Ascending aorta (tissue), 2 donors: ENCODE measurements at regions of chr13 and their contacts with region 1.

Region 1: GRCh38 chr13:44917589-44918325 is 71.5 kb downstream of the NUFIP1 start:
- DNase-seq: peak; percentile 82 to 97
- H3K4me3 ChIP-seq: peak overlapping the region; percentile 42 to 60
- H3K27ac ChIP-seq: peak overlapping the region; percentile 98
- H3K4me1 ChIP-seq: peaks cover 21 to 38% of the 10 kb centered on the region in 2 donors
- H3K27me3 ChIP-seq: no peaks in the 10 kb centered on the region
- CTCF ChIP-seq: peak; percentile 53 to 81 (median 62)

Region 2: DNA sequence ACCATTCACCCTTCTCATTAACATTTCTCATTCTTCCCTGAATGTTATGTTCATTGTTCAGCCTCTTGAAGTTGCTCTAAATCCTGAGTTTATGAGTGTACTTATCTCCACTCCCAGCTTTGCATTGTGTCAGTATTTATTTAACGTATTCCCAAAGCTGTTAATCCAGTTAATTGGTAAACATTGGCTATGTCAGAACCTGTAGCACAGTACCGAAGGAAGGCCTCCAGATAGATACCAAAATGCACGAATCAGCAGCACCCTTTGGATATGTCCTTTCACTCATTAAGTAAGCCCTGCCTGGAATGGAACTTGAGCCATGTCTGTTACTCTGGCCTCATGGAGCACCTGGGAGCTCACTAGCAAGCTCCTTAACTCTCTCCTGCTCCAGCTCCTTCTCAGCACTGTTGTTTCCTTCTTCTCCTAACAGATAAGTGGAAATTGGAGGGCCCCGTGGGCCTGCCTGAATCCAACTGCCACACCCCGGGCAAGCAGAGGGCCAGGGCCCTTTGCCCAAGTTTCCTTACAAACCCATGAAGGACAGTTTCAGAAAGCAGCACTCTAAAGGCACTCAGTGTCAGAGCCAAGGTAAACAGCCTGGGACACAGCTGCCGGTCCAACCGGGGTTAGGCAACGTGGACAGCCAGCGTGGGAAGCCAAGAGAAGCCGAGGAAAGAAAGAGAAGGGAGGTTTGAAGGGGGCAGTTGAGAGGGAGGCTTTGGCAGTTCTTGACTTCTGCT is 699.1 kb before region 1 on chr13:
- intact Hi-C with region 1: loop called (anchors 10 kb)
- DNase-seq: peak; percentile 37 to 90
- H3K4me3 ChIP-seq: no peak overlapping the region
- H3K27ac ChIP-seq: peak overlapping the region; percentile 68 to 78
- H3K4me1 ChIP-seq: peaks cover 10 to 33% of the 10 kb centered on the region in 2 donors
- H3K27me3 ChIP-seq: no peaks in the 10 kb centered on the region
- CTCF ChIP-seq: no peak

Region 3: DNA sequence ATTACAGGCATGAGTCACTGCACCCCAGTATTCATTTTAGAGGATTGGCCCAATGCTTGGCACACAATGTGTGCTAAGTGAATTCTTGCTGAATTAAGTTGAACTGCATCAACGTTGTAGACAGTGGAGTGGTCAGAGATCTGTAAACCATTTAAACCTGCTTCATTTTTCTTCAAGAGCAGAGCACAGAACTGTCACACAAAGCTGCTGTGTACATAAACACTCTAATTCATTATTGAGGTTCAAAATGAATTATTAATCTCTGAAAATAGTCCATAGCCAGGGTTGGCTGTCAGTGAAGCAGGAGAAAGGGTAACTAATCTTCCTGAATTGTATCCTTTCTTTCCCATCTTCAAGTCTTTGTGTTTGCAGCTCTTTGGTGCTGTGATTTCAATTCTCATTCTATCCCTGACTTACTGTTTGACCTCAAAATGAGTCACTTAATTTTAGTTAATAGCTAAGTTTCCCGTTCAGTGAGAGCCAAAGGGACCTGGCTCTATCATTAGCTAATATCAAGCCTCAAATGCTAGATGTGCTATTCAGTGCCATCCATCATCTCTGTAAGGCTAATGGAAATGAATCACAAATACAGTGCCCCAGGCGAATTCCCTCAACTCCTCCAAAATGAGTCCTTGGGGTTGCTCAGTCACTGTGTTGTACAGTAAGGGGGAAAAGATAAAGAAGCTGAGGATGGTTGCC is 264.6 kb before region 1 on chr13:
- intact Hi-C with region 1: no loop called
- DNase-seq: no peak
- H3K4me3 ChIP-seq: no peak overlapping the region
- H3K27ac ChIP-seq: no peak overlapping the region
- H3K4me1 ChIP-seq: peaks cover 0 to 2% of the 10 kb centered on the region in 2 donors
- H3K27me3 ChIP-seq: no peaks in the 10 kb centered on the region
- CTCF ChIP-seq: no peak

Region 4: DNA sequence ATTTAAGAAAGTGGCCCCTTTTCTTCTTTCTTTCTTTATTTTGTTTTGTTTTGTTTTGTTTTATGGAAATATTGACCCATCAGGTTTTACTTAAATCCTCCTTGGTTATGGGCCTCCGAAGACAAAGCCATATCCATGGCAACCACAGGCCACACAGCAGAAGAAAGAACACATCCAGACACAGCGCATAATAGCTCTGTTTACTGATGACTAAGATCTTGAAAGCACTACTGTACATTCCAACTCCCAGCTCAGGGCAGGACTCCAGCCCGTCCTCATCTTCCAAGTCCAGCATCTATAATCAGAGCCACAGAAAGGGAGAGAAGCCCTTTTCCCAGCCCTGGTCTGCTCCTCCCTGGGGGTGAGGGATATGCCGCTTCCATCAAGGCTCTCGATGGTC is 12.8 kb before region 1 on chr13:
- intact Hi-C with region 1: loop called (anchors 2 kb)
- DNase-seq: peak in 1 of 2 donors; percentile 81
- H3K4me3 ChIP-seq: no peak overlapping the region
- H3K27ac ChIP-seq: peak overlapping the region; percentile 75 to 76
- H3K4me1 ChIP-seq: peaks cover 20 to 37% of the 10 kb centered on the region in 2 donors
- H3K27me3 ChIP-seq: no peaks in the 10 kb centered on the region
- CTCF ChIP-seq: no peak

Region 5: DNA sequence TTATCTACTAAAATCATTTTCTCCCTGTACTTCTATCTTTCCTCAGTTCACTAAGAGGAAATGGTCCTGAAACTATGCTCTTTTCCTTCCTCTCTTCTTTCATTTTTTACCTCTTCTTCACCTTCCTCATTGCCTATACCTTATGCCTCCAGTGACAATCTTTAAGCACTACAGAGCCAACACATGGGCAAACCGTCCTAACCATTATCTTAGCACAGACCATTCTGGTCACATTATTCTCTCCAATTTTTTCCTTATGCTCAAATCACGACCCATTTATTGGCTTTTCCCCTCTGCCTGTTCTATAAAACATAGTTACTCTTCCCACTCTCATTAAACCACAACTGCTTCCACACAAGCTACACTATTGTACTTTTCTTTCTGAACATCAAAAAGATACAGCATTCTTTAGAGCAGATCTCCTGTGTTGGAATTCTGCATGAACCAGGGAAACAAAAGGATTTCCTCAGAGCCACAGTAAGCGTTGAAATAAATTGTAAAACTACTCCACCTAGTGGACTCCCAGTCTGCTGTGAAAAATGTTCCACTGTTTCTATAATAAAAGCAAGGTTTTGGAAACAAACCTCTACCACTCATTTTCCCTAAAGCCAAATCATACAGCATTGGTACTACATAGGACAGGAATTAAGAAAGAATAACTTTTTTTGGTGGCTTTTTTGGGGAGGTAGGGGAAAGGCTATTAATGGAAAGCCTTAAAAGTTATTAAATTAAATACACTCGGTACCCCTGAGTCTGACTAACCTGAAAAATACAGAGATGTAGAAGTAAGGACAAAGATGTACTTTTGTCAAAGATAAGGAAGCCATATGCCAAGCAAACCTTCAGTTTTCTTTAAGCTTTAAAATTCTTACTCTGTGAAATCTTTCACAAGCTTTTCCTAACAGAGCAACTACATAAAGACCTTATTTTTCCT is 52.1 kb after region 1 on chr13:
- intact Hi-C with region 1: loop called (anchors 1 kb)
- DNase-seq: no peak
- H3K4me3 ChIP-seq: peak overlapping the region in 1 of 2 donors; percentile 8
- H3K27ac ChIP-seq: peak overlapping the region; percentile 35 to 62
- H3K4me1 ChIP-seq: peaks cover 0 to 12% of the 10 kb centered on the region in 2 donors
- H3K27me3 ChIP-seq: no peaks in the 10 kb centered on the region
- CTCF ChIP-seq: peak; percentile 79 to 83 (median 79)

Region 6: GRCh38 chr13:45340422-45340925 is 422.7 kb after region 1 on chr13:
- intact Hi-C with region 1: loop called (anchors 5 kb)
- DNase-seq: peak; percentile 69 to 96
- H3K4me3 ChIP-seq: peak overlapping the region; percentile 90 to 93
- H3K27ac ChIP-seq: peak overlapping the region; percentile 99 to 100
- H3K4me1 ChIP-seq: peaks cover 6 to 36% of the 10 kb centered on the region in 2 donors
- H3K27me3 ChIP-seq: no peaks in the 10 kb centered on the region
- CTCF ChIP-seq: peak; percentile 42 to 84 (median 46)